GM12878 (cell line): ENCODE measurements at regions of chr3 and their contacts with region 1.

Region 1: DNA sequence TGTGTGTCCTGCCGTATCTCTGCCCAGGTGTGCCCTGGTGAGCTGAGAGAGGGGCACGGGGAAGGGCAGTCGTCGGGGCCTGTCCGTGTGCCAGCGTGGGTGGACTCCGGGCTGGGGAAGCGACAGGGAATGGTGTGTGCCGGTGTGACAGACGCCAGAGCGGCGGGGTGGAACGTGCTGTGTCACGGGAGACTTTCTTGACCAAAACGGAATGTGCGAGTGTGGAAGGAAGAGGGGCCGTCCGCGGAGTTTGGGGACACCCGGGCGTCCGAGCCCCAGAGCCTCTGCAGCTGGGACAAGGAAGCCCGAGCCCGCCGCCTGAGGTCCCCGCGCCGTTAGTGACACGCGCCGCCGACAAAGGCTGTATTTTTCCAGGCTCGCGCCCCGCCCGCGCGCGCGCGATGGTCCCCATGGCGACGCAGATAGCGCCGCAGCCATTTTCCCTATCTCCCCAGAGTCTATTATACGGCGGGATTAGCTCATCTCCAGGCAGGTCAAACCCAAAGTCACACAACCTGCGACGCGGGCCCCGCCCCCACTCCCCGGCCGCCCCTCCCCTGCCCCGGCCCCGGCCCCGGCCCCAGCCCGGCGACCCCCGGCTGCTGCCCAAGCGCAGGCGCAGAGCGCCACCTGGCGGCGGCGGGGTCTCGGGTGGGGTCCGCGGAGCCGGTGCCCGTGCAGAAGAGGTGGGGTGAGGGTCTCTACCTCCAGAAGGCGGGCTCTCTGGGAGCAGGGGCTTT is 4.6 kb upstream of the GATA2 start:
- DNase-seq: no peak
- ATAC-seq: peak; percentile 72
- H3K4me3 ChIP-seq: 0 out of 2 replicates have a peak overlapping the region, but pooled peaks have one; percentile 11
- H3K27ac ChIP-seq: no peak overlapping the region
- H3K4me1 ChIP-seq: no peaks in the 10 kb centered on the region
- H3K27me3 ChIP-seq: peaks cover 9% of the 10 kb centered on the region in 2 experiments
- CTCF ChIP-seq: peak; percentile 46 to 73 (median 51)
- EP300 ChIP-seq: no peak
- POLR2A ChIP-seq: no peak
- RAD21 ChIP-seq: peak; percentile 61

Region 2: GRCh38 chr3:128226795-128227395 is 270.7 kb before region 1 on chr3:
- CTCF ChIA-PET with region 1: interaction called, 9 read pairs
- POLR2A ChIA-PET with region 1: no interaction called
- RAD21 ChIA-PET with region 1: no interaction called
- SMC1A ChIA-PET with region 1: no interaction called
- in situ Hi-C with region 1: no loop called
- intact Hi-C with region 1: loop called (anchors 10 kb)
- DNase-seq: no peak
- ATAC-seq: peak; percentile 96
- H3K4me3 ChIP-seq: no peak overlapping the region
- H3K27ac ChIP-seq: no peak overlapping the region
- H3K4me1 ChIP-seq: no peaks in the 10 kb centered on the region
- H3K27me3 ChIP-seq: no peaks in the 10 kb centered on the region
- CTCF ChIP-seq: peak; percentile 66 to 92 (median 67)
- EP300 ChIP-seq: no peak
- POLR2A ChIP-seq: no peak
- RAD21 ChIP-seq: peak; percentile 52

Region 3: GRCh38 chr3:128360705-128361271 is 136.8 kb before region 1 on chr3:
- CTCF ChIA-PET with region 1: no interaction called
- POLR2A ChIA-PET with region 1: no interaction called
- RAD21 ChIA-PET with region 1: no interaction called
- SMC1A ChIA-PET with region 1: no interaction called
- in situ Hi-C with region 1: no loop called
- intact Hi-C with region 1: no loop called
- DNase-seq: no peak
- ATAC-seq: no peak
- H3K4me3 ChIP-seq: no peak overlapping the region
- H3K27ac ChIP-seq: no peak overlapping the region
- H3K4me1 ChIP-seq: no peaks in the 10 kb centered on the region
- H3K27me3 ChIP-seq: no peaks in the 10 kb centered on the region
- CTCF ChIP-seq: no peak
- EP300 ChIP-seq: no peak
- POLR2A ChIP-seq: no peak
- RAD21 ChIP-seq: no peak

Region 4: DNA sequence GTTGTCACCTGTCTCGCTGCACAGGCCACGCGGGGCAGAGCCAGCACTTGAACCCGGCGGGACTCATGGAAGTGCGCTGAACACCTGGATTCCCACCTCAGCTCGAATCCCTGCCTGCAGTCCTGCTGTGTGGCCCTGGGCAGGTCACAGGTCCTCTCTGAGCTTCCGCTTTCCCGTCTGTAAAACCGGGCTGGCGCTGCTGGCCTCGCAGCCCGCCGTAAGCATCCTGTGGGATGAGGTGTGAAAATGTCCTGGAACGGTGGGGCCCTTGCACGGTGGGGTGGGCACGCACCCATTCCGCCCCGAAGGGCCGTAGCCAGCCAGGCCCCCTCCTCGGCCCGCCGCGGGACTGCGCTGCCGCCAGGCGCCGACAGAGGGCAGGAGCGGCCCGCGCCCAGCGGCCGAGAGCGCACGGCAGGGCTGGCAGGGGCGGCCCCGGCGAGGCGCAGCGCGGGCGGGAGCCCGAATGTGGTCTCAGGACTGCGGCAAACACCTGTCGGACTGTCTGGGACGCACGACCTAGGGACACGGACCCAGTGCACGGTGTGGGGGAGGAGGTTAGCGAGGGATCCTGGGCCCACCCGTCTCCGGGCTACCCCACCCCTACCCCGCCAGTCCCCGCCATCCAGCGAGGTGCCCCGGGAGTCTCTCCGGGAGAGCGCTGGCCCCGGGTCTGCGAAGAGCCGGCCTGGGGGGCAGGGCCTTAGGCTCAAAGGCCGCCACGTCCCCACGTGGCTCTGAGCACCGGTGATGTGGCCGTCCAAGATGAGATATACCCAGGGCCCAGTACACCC is 71.2 kb before region 1 on chr3:
- CTCF ChIA-PET with region 1: interaction called, 10 read pairs
- POLR2A ChIA-PET with region 1: no interaction called
- RAD21 ChIA-PET with region 1: interaction called, 3 read pairs
- SMC1A ChIA-PET with region 1: no interaction called
- in situ Hi-C with region 1: no loop called
- intact Hi-C with region 1: loop called (anchors 1 kb)
- DNase-seq: no peak
- ATAC-seq: peak; percentile 98
- H3K4me3 ChIP-seq: no peak overlapping the region
- H3K27ac ChIP-seq: no peak overlapping the region
- H3K4me1 ChIP-seq: no peaks in the 10 kb centered on the region
- H3K27me3 ChIP-seq: no peaks in the 10 kb centered on the region; a peak in 1 of 4 replicates
- CTCF ChIP-seq: peak; percentile 74 to 88 (median 83)
- EP300 ChIP-seq: no peak
- POLR2A ChIP-seq: no peak
- RAD21 ChIP-seq: peak; percentile 93